ENCODE measurements at regions of chr5 and their contacts with region 1.

Region 1: DNA sequence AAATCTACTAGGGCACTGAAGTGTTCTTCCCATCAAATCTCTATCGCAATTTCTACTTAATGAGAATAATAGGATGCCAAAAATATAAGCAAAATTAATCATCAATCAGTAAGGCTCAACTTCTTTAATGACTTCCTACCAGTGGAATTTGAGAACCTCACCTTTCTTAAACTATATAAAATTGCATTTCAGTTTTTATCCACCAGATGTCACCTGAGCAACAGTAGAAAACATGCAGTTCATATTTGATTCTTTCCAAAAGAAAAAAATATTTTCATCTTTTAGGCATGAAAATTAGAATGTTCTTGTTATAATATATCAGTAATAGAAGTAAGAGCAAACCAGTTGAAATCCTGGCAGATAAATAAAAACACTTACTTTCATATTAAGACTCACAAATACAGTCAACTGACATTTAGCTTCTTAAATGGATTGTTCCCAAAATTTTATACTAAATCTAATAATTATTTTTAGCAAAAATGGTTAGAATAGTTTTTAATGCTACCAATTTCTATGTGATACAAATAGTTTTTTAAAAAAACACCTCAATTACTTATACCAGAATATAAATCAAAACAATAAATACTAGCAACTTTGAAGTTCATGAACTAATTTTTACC is 13.4 kb upstream of the CCDC112 start:
- DNase-seq: no peak
- ATAC-seq: peak in 2 of 4 donors; percentile 47 to 51
- H3K4me3 ChIP-seq: no peak overlapping the region
- H3K27ac ChIP-seq: no peak overlapping the region
- H3K4me1 ChIP-seq: no peaks in the 10 kb centered on the region
- H3K27me3 ChIP-seq: no peaks in the 10 kb centered on the region
- CTCF ChIP-seq: peak; percentile 67 to 89 (median 74)
- POLR2A ChIP-seq: no peak

Region 2: DNA sequence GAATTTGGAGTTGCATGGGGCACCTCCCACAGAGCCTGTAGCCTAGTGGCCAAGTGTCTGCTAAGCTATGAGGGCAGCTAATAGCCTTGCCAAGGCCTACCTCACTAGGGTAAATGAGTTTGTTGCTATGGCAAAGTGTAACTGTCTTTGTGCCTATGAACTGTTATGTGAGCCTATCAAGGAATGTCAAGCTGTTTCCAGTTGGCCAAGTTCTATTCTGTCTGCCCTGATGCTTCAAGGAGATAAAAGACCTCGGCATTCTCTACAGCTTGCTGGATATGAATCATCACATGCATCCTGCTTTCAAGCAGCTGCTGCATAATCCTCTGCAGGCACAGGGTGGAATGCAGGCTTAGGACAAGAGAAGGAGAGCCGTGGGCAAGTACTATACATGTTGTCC is 56.4 kb after region 1 on chr5:
- intact Hi-C with region 1: loop called in 8 of 10 experiments (anchors 5 to 10 kb)
- DNase-seq: peak in 1 of 5 donors; percentile 37
- ATAC-seq: peak; percentile 42 to 84 (median 79)
- H3K4me3 ChIP-seq: no peak overlapping the region
- H3K27ac ChIP-seq: peak overlapping the region in 6 of 12 donors; percentile 6 to 56 (median 30)
- H3K4me1 ChIP-seq: peaks cover 0 to 12% (median 4%) of the 10 kb centered on the region in 12 donors
- H3K27me3 ChIP-seq: no peaks in the 10 kb centered on the region
- CTCF ChIP-seq: no peak
- POLR2A ChIP-seq: no peak

Region 3: GRCh38 chr5:115579747-115580173 is 269.9 kb after region 1 on chr5:
- intact Hi-C with region 1: loop called in 7 of 10 experiments (anchors 1 to 5 kb)
- DNase-seq: no peak
- ATAC-seq: no peak
- H3K4me3 ChIP-seq: no peak overlapping the region
- H3K27ac ChIP-seq: no peak overlapping the region
- H3K4me1 ChIP-seq: peaks cover 0 to 6% (median 0%) of the 10 kb centered on the region in 12 donors
- H3K27me3 ChIP-seq: no peaks in the 10 kb centered on the region
- CTCF ChIP-seq: no peak
- POLR2A ChIP-seq: no peak

Region 4: GRCh38 chr5:115831163-115831768 is 521.4 kb after region 1 on chr5:
- intact Hi-C with region 1: loop called in 5 of 10 experiments (anchors 5 to 10 kb)
- DNase-seq: no peak
- ATAC-seq: peak in 1 of 4 donors; percentile 51
- H3K4me3 ChIP-seq: no peak overlapping the region
- H3K27ac ChIP-seq: no peak overlapping the region
- H3K4me1 ChIP-seq: no peaks in the 10 kb centered on the region
- H3K27me3 ChIP-seq: no peaks in the 10 kb centered on the region
- CTCF ChIP-seq: peak; percentile 62 to 83 (median 73)
- POLR2A ChIP-seq: no peak

Region 5: GRCh38 chr5:116068028-116068632 is 758.3 kb after region 1 on chr5:
- intact Hi-C with region 1: loop called in 2 of 10 experiments (anchors 5 to 10 kb)
- DNase-seq: no peak
- ATAC-seq: no peak
- H3K4me3 ChIP-seq: no peak overlapping the region
- H3K27ac ChIP-seq: no peak overlapping the region
- H3K4me1 ChIP-seq: peaks cover 0 to 2% (median 0%) of the 10 kb centered on the region in 12 donors
- H3K27me3 ChIP-seq: peaks cover 0 to 10% (median 0%) of the 10 kb centered on the region in 9 donors
- CTCF ChIP-seq: peak; percentile 77 to 92 (median 86)
- POLR2A ChIP-seq: no peak

Measured in heart left ventricle (tissue), 16 donors.